PC-9 (cell line): ENCODE measurements at regions of chr9 and their contacts with region 1.

Region 1: DNA sequence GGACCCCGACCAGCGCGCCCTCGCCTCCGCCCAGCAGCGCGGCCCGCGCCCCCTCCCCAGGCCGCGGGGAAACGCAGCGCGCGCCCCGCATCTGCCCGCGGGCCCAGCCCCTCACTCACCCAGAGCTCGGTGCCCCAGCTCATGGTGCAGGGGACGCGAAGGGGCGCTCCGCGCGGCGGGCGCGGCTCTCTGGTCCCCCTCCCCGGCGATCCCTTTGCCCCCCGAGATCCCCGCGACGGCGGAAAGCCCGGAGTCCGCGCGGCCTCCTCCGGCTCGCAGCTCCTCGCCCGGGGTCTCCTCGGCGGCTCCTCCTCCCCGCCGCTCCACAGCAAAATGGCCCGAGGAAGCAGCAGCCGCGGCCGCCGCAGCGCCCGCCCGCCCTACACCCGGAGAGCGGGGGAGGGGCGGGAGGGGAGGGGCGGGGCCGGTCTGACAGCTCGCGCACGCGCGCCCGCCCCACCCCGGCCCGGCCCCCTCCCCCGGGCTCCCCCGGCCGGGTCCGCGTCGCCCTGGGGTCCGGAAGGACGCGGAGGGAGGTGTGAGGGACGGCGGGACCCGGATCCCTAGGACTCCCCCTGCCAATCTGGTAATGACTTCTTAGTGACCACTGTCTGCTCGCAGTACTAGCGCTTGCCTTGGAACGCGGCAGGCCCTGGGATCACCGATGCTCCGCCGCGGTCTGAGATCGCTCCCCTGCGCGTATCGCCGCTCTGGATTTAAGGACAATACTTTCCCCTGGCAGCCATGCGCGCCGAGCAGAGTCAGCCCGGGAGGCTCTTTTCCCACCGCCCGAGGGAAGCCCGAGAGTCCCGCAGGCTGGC is at the start of gene FNBP1:
- DNase-seq: peak; percentile 54 to 81
- H3K4me3 ChIP-seq: peak within 1 kb of the TSS; percentile 93
- H3K27ac ChIP-seq: peak within 1 kb of the TSS; percentile 16; the same call in 1 of the 2 replicates
- H3K4me1 ChIP-seq: peaks cover 31% of the 10 kb centered on the region
- H3K27me3 ChIP-seq: no peaks in the 10 kb centered on the region
- CTCF ChIP-seq: no peak
- total RNA-seq, gene FNBP1: 68.2 and 80.7 TPM in 2 replicates

Region 2: GRCh38 chr9:129954868-129955550 is 88.0 kb before region 1 on chr9:
- CTCF ChIA-PET with region 1: no interaction called
- POLR2A ChIA-PET with region 1: no interaction called
- intact Hi-C with region 1: no loop called
- DNase-seq: no peak
- H3K4me3 ChIP-seq: no peak overlapping the region
- H3K27ac ChIP-seq: peak overlapping the region; percentile 43; the same call in 1 of the 2 replicates
- H3K4me1 ChIP-seq: peaks cover 8% of the 10 kb centered on the region
- H3K27me3 ChIP-seq: no peaks in the 10 kb centered on the region
- CTCF ChIP-seq: no peak

Region 3: GRCh38 chr9:129995409-129996160 is 47.5 kb before region 1 on chr9:
- CTCF ChIA-PET with region 1: no interaction called
- POLR2A ChIA-PET with region 1: interaction called, 5 read pairs
- intact Hi-C with region 1: loop called (anchors 5 kb)
- DNase-seq: peak in 1 of 2 experiments; percentile 21
- H3K4me3 ChIP-seq: no peak overlapping the region
- H3K27ac ChIP-seq: peak overlapping the region; percentile 30; the same call in 1 of the 2 replicates
- H3K4me1 ChIP-seq: peaks cover 34% of the 10 kb centered on the region
- H3K27me3 ChIP-seq: no peaks in the 10 kb centered on the region
- CTCF ChIP-seq: no peak

Region 4: DNA sequence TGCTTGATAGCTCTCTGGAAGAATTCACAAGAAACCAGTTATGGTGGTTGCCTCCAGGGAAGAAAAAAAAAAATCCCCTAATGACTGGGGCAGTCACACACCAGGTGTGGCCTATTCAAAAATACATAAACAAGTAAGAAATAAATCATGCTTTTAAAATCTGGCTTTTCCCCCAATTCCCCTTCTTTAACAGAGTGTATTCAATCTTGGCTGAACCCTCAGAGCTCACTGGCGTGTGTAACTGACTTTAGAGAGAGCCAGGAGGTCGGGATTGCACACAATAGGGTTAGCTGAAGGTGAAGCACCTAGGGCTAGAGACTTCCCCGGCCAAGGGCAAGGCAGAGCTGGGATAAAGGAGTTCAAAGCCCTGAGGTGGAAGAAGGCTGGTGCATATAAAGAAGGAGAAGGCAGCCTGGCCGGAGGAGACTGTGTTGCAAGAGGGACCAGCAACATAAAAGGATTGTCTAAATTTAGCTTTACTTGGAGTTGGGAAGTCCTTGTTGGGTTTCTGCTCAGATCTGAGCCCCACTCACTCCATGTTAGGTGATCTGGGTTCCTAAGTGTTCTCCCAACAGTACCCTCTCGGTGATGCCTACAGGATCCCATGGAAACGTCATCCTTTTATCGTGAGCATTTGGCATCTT is 19.8 kb before region 1 on chr9:
- CTCF ChIA-PET with region 1: interaction called, 3 read pairs
- POLR2A ChIA-PET with region 1: interaction called, 23 read pairs
- intact Hi-C with region 1: no loop called
- DNase-seq: peak; percentile 49 to 94
- H3K4me3 ChIP-seq: no peak overlapping the region
- H3K27ac ChIP-seq: peak overlapping the region; percentile 89
- H3K4me1 ChIP-seq: peaks cover 72% of the 10 kb centered on the region
- H3K27me3 ChIP-seq: no peaks in the 10 kb centered on the region
- CTCF ChIP-seq: no peak

Region 5: GRCh38 chr9:130073373-130073772 is 30.3 kb after region 1 on chr9:
- CTCF ChIA-PET with region 1: no interaction called
- POLR2A ChIA-PET with region 1: interaction called, 6 read pairs
- intact Hi-C with region 1: loop called (anchors 2 kb)
- DNase-seq: no peak
- H3K4me3 ChIP-seq: no peak overlapping the region
- H3K27ac ChIP-seq: no peak overlapping the region
- H3K4me1 ChIP-seq: peaks cover 5% of the 10 kb centered on the region; the same call in 1 of the 2 replicates
- H3K27me3 ChIP-seq: no peaks in the 10 kb centered on the region
- CTCF ChIP-seq: no peak

Region 6: DNA sequence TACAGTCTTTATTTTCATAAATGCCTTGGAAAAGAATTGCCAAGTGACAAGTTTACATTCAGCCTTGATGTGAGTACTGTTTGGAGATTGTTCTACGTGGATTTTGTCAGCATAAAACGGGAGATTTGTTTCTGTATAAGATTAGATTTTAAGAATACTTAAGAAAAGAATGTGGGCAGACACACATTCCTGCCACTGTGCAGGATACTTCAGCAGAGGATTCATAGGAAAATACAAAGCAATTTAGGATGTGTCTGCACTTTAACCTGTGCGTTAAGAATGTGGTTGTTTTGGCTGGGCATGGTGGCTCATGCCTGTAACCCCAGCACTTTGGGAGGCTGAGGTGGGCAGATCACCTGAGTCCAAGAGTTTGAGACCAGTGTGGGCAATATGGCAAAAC is 47.9 kb after region 1 on chr9:
- CTCF ChIA-PET with region 1: no interaction called
- POLR2A ChIA-PET with region 1: interaction called, 3 read pairs
- intact Hi-C with region 1: loop called (anchors 5 kb)
- DNase-seq: no peak
- H3K4me3 ChIP-seq: no peak overlapping the region
- H3K27ac ChIP-seq: no peak overlapping the region
- H3K4me1 ChIP-seq: no peaks in the 10 kb centered on the region
- H3K27me3 ChIP-seq: no peaks in the 10 kb centered on the region
- CTCF ChIP-seq: no peak

Region 7: DNA sequence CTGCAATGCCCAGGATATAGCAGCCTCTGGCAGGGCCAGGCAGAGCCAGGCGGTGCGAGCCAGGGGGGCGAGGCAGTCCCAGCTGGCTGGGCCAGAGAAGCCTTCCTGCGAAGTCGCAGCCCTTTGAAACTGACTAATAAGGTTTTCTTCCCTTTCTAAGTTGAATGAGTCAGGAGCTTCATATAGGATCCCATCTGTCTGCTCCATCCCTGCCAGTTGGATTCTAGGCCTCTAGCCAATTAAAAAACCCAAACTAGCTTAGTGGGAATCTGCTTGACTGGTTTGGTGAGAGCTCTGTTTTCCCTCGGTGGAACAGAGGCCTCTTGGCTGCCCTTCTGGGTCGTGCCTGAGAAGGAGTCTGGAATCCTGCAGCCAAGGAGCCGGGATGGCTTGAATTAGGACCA is 1766.9 kb after region 1 on chr9:
- CTCF ChIA-PET with region 1: no interaction called
- POLR2A ChIA-PET with region 1: no interaction called
- intact Hi-C with region 1: no loop called
- DNase-seq: no peak
- H3K4me3 ChIP-seq: no peak overlapping the region
- H3K27ac ChIP-seq: no peak overlapping the region
- H3K4me1 ChIP-seq: no peaks in the 10 kb centered on the region
- H3K27me3 ChIP-seq: peaks cover 81% of the 10 kb centered on the region
- CTCF ChIP-seq: no peak